ENCODE measurements at regions of chr19 and their contacts with region 1.

Region 1: GRCh38 chr19:47582320-47582909 is 9.5 kb upstream of the ZNF541 start:
- DNase-seq: no peak
- H3K4me3 ChIP-seq: no peak overlapping the region
- H3K27ac ChIP-seq: no peak overlapping the region
- H3K4me1 ChIP-seq: no peaks in the 10 kb centered on the region
- H3K27me3 ChIP-seq: no peaks in the 10 kb centered on the region
- CTCF ChIP-seq: no peak
- POLR2A ChIP-seq: no peak

Region 2: DNA sequence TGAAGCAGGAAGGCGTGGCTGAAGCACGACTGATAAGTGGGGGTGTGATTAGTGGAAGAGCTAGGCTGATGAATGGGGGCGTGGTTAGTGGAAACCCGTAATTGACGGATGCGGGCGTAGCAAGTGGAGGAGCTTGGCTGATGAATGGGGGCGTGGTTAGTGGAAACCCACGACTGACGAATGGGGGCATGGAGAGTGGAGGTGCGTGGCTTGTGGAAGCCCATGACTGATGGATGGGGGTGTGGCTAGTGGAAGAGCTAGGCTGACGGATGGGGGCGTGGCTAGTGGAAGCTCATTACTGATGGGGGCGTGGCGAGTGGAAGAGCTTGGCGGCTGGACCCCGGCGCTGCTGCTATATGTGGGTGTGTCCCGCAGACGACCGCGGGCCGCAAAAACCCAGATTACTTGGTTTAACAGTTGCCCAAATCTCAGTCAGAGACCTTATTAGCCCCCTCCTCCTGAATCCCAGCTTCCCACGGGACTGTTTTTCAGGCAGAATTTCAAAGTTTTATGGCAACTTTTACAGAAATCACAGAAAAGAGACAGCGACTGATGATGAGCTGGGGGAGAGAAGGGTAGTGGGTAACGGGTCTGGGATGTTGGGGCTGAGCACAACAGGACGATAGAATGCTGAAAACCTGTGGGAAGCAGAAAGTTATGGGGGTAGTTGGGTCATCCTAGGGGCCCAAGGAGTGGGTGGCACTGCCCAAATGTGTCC is 154.1 kb before region 1 on chr19:
- CTCF ChIA-PET with region 1: no interaction called
- POLR2A ChIA-PET with region 1: no interaction called
- dilution Hi-C with region 1: no loop called
- intact Hi-C with region 1: no loop called
- DNase-seq: peak; percentile 99
- H3K4me3 ChIP-seq: no peak overlapping the region
- H3K27ac ChIP-seq: no peak overlapping the region
- H3K4me1 ChIP-seq: peaks cover 8% of the 10 kb centered on the region
- H3K27me3 ChIP-seq: peaks cover 9 to 14% of the 10 kb centered on the region in 2 experiments
- CTCF ChIP-seq: no peak
- POLR2A ChIP-seq: no peak

Region 3: GRCh38 chr19:47503130-47503825 is 79.1 kb before region 1 on chr19:
- CTCF ChIA-PET with region 1: no interaction called
- POLR2A ChIA-PET with region 1: interaction called, 12 read pairs
- dilution Hi-C with region 1: no loop called
- intact Hi-C with region 1: no loop called
- DNase-seq: no peak
- H3K4me3 ChIP-seq: no peak overlapping the region
- H3K27ac ChIP-seq: no peak overlapping the region
- H3K4me1 ChIP-seq: no peaks in the 10 kb centered on the region
- H3K27me3 ChIP-seq: no peaks in the 10 kb centered on the region
- CTCF ChIP-seq: no peak
- POLR2A ChIP-seq: no peak

Region 4: DNA sequence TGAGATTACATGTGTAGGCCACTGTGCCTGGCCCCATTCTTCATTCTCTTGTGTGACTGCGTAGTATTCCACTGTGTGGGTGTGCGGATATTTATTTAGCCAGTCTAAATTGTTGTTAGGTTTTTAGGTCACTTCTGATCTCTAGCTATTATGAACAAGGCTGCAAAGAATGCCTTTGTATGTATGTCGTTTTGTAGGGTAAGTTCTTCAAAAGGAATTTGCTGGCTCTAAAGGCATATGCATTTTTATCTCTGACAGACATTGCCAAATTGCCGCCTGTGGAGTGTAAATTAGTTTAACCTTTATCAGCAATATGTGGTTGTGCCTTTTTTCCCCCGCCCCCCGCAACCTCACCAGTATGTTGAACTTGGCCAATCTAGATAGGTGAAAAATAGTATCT is 100.5 kb after region 1 on chr19:
- CTCF ChIA-PET with region 1: no interaction called
- POLR2A ChIA-PET with region 1: no interaction called
- dilution Hi-C with region 1: no loop called
- intact Hi-C with region 1: no loop called
- DNase-seq: no peak
- H3K4me3 ChIP-seq: no peak overlapping the region
- H3K27ac ChIP-seq: no peak overlapping the region
- H3K4me1 ChIP-seq: no peaks in the 10 kb centered on the region
- H3K27me3 ChIP-seq: no peaks in the 10 kb centered on the region
- CTCF ChIP-seq: no peak
- POLR2A ChIP-seq: no peak

Region 5: DNA sequence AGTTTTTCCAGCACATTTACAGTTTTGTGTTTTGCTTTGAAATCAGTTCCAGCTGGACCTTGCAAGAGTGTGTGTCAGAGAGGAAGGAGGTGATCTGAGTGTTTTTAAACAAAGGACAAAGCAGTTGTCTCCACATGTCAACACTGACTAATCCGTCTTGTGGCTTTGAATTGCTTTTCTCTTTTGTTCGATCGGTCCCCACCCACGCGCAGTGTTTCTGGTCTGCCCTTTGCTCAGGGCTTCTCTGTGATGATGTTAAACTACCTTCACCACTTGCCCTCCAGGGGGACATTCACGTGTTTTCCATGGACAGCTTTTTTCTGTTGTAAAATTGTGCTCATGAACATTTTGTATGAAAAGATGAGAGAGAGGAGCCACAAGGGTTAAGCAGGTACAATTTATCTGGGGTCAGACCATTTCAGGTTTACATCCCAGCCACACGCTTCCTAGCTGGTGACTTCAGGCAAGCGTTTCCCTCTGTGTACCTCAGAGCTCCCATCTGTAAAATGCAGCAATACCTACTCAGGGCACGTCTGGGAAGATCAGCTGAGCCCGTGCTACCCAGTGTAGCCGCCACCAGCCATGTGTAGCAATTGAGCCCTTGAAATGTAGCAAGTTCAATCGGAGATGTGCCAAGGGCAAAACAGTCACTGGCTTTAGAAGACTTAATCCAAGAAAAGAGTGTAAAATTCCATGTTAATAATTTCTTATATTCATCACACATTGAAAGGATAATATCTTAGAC is 541.7 kb after region 1 on chr19:
- CTCF ChIA-PET with region 1: no interaction called
- POLR2A ChIA-PET with region 1: no interaction called
- dilution Hi-C with region 1: no loop called
- intact Hi-C with region 1: no loop called
- DNase-seq: peak; percentile 96
- H3K4me3 ChIP-seq: no peak overlapping the region
- H3K27ac ChIP-seq: peak overlapping the region; percentile 96
- H3K4me1 ChIP-seq: peaks cover 51% of the 10 kb centered on the region
- H3K27me3 ChIP-seq: no peaks in the 10 kb centered on the region
- CTCF ChIP-seq: peak; percentile 39 to 41
- POLR2A ChIP-seq: peak; percentile 58

Measured in endothelial cell of umbilical vein (primary cell).